Activated naive CD4-positive, alpha-beta T cell treated with anti-CD3 and anti-CD28 coated beads, Interleukin-2, amount 10 ng/mL, durations not matched to agents 7 days and 5 days (primary cell): ENCODE measurements at regions of chr10 and their contacts with region 1.

Region 1: GRCh38 chr10:102167861-102168260 is 15.7 kb downstream of the NOLC1 start:
- DNase-seq: no peak
- H3K4me3 Mint-ChIP-seq: no peak overlapping the region
- H3K27ac Mint-ChIP-seq: no peak overlapping the region
- H3K4me1 Mint-ChIP-seq: peaks cover 26% of the 10 kb centered on the region
- H3K27me3 Mint-ChIP-seq: peaks cover 4% of the 10 kb centered on the region

Region 2: GRCh38 chr10:101974091-101974971 is 193.5 kb before region 1 on chr10:
- CTCF ChIA-PET with region 1: no interaction called
- DNase-seq: no peak
- H3K4me3 Mint-ChIP-seq: peak overlapping the region; percentile 39
- H3K27ac Mint-ChIP-seq: peak overlapping the region; percentile 83
- H3K4me1 Mint-ChIP-seq: peaks cover 25% of the 10 kb centered on the region
- H3K27me3 Mint-ChIP-seq: no peaks in the 10 kb centered on the region

Region 3: GRCh38 chr10:102185811-102186527 is 18.1 kb after region 1 on chr10:
- CTCF ChIA-PET with region 1: interaction called, 11 read pairs
- DNase-seq: no peak
- H3K4me3 Mint-ChIP-seq: no peak overlapping the region
- H3K27ac Mint-ChIP-seq: no peak overlapping the region
- H3K4me1 Mint-ChIP-seq: peaks cover 22% of the 10 kb centered on the region
- H3K27me3 Mint-ChIP-seq: no peaks in the 10 kb centered on the region

Region 4: DNA sequence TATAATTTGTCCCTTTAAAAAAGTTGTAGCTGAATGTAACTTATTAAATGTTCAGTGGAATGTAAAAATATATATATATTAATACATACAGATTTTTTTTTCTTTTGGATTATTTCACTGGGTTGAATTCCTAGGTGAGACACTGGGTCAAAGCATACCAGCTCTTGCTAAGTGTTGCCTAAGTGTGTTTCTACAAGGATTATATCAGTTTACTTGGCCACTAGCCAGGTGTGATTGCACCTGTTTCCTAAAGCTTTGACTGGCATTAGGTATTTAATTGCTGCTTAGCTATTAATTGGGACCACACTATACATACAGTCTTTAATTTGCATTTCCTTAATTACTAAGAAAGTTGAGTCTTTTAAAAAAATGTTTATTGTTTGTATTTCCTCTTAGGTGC is 52.8 kb after region 1 on chr10:
- CTCF ChIA-PET with region 1: interaction called, 29 read pairs
- DNase-seq: no peak
- H3K4me3 Mint-ChIP-seq: no peak overlapping the region
- H3K27ac Mint-ChIP-seq: no peak overlapping the region
- H3K4me1 Mint-ChIP-seq: peaks cover 2% of the 10 kb centered on the region
- H3K27me3 Mint-ChIP-seq: peaks cover 37% of the 10 kb centered on the region

Region 5: DNA sequence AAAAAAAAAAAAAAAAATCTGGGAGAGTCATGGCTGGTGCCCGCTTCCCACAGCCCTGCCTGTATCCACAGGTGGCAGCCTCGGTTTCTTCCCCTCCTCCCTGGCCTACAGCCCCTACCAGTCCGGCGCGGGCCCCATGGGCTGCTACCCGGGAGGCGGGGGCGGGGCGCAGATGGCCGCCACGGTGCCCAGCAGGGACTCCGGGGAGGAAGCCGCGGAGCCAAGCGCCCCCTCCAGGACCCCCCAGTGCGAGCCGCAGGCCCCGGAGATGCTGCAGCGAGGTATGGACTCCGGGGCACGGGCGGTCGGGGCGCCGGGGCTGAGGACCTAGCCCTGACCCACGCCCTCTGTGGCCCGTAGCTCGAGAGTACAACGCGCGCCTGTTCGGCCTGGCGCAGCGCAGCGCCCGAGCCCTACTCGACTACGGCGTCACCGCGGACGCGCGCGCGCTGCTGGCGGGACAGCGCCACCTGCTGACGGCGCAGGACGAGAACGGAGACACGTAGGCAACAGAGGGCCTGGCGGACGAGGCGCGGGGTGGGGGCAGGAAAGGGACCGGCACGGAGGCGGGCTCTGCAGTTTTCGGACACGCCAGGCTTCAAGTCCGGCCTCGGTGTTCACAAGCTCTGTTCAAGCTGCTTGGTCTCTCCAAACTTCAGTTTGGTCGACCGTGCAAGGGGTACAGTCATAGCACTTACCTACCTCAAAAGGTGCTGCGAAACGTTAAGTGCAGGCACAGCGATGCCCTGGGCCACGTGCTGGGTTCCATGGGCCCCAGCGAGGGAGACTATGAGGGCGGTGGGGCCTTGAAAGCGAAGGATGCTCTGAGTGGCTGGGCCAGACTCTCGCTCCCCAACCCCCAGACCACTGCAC is 231.6 kb after region 1 on chr10:
- CTCF ChIA-PET with region 1: interaction called, 19 read pairs
- DNase-seq: peak; percentile 90
- H3K4me3 Mint-ChIP-seq: peak overlapping the region; percentile 62
- H3K27ac Mint-ChIP-seq: peak overlapping the region; percentile 70
- H3K4me1 Mint-ChIP-seq: peaks cover 40% of the 10 kb centered on the region
- H3K27me3 Mint-ChIP-seq: no peaks in the 10 kb centered on the region